ENCODE measurements at regions of chr4 and their contacts with region 1.

Region 1: GRCh38 chr4:6716018-6716911 is at the start of gene BLOC1S4:
- DNase-seq: peak; percentile 95
- CTCF ChIP-seq: no peak

Region 2: DNA sequence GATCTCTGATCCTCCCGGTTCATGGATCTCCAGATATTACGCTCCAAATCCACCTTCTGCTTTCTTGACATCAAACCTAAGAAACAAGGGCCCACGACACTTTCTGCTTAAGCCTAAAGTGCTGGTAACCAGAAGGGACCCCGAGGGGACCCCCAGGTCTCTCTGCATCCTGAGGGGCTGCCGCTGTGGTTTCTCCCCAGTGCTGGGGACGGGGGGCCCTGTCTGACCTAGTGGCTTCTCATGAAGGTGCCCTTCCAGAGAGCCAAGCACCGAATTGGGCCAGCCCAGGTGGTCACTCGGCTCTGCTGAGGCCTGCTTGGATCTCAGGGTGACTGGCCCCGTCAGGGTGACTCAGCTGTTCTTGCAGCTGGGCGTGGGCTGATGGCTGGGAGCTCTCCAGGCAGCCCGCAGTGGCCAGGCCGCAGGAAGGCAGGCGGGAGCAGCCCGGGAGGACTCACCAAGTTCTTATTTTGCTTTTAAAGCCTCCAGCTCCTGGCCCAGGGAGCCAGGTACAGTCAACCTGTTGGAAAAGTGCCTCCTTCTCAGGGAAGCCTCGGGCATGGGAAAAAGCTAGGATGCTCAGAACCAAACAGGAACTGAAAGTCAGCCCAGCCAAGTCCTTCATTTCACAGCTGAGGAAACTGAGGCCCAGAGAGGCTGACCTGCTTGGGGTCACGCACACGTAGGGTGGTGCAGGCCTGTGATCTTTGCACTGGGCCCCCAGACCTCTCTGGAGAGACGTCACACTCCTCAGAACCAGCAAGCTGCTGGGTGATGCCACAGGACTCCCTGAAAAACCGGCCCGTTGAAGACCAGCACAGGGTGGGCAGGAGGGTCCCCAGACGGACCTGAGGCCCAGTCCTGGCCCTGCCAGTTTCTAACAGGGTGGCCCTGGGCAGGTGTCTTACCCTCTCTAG is 16.4 kb after region 1 on chr4:
- CTCF ChIA-PET with region 1: interaction called, 23 read pairs
- POLR2A ChIA-PET with region 1: no interaction called
- DNase-seq: no peak
- CTCF ChIP-seq: no peak

Region 3: DNA sequence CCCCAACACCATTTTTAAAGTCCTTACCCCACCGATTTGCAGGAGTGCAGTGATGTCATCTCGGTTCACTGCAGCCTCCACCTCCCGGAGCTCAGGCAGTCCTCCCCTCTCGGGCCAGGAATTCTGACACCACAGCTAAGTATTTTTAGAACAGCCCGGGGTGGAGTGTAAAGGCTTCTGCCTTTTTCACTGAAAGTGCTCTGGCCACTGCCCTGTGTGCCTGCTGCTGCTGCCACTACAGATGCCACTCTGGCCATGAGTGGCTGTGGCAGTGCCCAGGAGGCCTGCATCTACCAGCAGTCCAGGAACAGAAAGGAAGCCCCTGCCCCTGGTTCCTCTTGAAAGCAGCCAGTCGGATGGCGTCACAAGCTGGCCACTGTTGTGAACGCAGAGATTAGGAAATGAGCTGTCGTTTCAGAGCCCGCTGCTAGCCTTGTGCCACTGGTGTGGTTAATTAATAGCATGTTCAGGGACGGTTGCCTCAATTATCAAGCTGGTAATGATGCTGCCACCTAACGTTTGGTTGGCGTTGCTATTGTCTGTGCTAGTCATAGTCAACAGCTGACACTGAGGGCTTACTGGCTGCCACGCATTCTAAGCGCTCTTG is 169.8 kb after region 1 on chr4:
- CTCF ChIA-PET with region 1: interaction called, 10 read pairs
- POLR2A ChIA-PET with region 1: no interaction called
- DNase-seq: peak; percentile 45
- CTCF ChIP-seq: peak; percentile 31

Region 4: DNA sequence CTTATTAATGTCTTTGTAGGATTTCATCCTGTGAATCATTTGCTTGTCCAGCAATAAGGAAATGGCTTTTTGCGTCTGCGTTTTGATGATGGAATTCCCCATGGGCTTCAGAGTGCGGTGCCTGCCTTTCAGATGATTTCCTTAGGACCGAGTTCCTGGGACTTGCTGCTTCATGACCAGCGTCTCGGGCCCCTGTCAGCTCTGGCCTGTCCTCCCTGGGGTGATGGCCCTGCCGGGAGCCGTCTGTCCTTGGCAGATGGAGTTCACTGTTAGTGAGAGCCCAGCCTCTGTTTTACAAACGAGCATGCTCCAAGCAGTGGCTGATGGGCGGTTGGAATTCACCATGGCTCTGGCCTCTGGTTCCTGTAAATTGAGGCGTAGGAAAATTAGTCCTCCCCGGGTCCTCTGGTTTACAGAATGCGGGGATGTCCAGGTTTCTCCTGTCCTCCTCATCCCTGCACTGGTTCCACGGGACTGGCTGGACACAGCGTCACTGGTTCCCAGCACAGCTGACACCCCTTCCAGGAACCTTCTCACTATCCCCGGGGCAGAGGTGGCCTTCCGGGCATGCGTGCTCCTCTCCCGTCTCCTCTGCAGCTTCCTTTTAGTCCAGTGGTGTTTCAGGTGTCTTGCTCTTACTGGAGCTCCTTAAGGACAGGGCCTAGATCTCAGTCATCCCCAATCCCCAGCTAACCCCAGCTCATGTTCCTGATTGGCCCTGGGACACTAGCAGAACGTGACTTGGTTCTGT is 228.2 kb after region 1 on chr4:
- CTCF ChIA-PET with region 1: no interaction called
- POLR2A ChIA-PET with region 1: no interaction called
- DNase-seq: no peak
- CTCF ChIP-seq: no peak

Region 5: GRCh38 chr4:7081891-7082471 is 365.7 kb after region 1 on chr4:
- CTCF ChIA-PET with region 1: interaction called, 16 read pairs
- POLR2A ChIA-PET with region 1: interaction called, 5 read pairs
- DNase-seq: peak; percentile 66
- CTCF ChIP-seq: peak; percentile 55